ENCODE measurements at regions of chr5 and their contacts with region 1.

Region 1: GRCh38 chr5:98773464-98774191 is at the start of gene RGMB:
- DNase-seq: peak; percentile 98
- H3K4me3 ChIP-seq: peak within 1 kb of the TSS; percentile 71 to 82 (median 80)
- H3K27ac ChIP-seq: peak within 1 kb of the TSS; percentile 76
- H3K4me1 ChIP-seq: peaks cover 42% of the 10 kb centered on the region
- H3K27me3 ChIP-seq: no peaks in the 10 kb centered on the region
- CTCF ChIP-seq: peak in 1 of 2 donors; percentile 17
- total RNA-seq, gene RGMB: 22.3 to 24.8 TPM

Region 2: DNA sequence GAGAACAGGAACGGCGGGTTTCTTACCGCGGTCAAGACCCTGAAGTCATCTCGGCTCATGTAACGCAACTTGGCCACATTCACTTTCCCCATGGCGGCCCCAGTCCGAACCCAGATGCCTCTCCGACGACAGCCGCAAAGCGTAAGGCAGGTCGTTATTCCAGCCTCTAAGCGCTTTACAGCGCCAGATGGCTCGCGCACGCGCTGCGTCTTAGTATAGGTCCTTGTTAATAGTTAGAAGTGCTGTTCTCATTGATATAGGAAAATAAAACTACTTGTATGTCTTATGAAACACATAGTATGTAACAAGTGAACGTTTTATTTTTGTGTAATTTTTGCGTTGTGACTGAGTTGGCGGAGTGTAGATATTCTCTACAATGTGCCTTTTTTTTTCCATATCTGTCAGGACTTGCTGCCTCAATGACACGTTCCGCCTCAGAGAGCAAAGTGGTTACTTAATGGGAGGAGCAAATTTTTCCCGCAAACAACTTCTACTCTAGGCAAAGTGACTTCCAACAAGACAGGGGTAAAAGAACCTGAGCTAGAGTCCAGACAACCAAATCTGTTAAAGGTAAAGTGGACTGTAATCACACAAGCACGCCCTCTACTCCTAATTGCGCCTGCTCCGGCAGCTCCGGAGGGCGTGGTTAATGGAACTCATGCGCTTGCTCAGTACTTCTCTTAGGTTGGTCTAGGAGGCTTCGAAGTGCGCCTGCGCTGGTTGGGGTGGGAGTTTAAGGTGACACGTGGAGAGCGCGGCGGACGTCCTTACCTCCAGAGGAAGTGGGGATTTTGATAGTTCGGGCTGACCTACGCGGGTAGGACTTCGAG is 1590.3 kb before region 1 on chr5 and contains the start of gene RIOK2:
- CTCF ChIA-PET with region 1: interaction called, 3 read pairs
- dilution Hi-C with region 1: no loop called
- in situ Hi-C with region 1: no loop called
- intact Hi-C with region 1: loop called (anchors 5 kb)
- DNase-seq: peak; percentile 91
- H3K4me3 ChIP-seq: peak within 1 kb of the TSS; percentile 80 to 89 (median 80)
- H3K27ac ChIP-seq: peak within 1 kb of the TSS; percentile 97
- H3K4me1 ChIP-seq: peaks cover 10% of the 10 kb centered on the region
- H3K27me3 ChIP-seq: no peaks in the 10 kb centered on the region
- CTCF ChIP-seq: no peak
- total RNA-seq, gene RIOK2: 18.5 to 38.3 TPM

Region 3: GRCh38 chr5:97425511-97425910 is 1348.1 kb before region 1 on chr5:
- CTCF ChIA-PET with region 1: no interaction called
- dilution Hi-C with region 1: no loop called
- in situ Hi-C with region 1: no loop called
- intact Hi-C with region 1: loop called (anchors 1 kb)
- DNase-seq: peak; percentile 2
- H3K4me3 ChIP-seq: no peak overlapping the region
- H3K27ac ChIP-seq: no peak overlapping the region
- H3K4me1 ChIP-seq: no peaks in the 10 kb centered on the region
- H3K27me3 ChIP-seq: no peaks in the 10 kb centered on the region
- CTCF ChIP-seq: peak; percentile 27 to 59

Region 4: GRCh38 chr5:97877588-97877987 is 896.0 kb before region 1 on chr5:
- CTCF ChIA-PET with region 1: interaction called, 4 read pairs
- dilution Hi-C with region 1: no loop called
- in situ Hi-C with region 1: no loop called
- intact Hi-C with region 1: loop called (anchors 5 kb)
- DNase-seq: no peak
- H3K4me3 ChIP-seq: no peak overlapping the region
- H3K27ac ChIP-seq: no peak overlapping the region
- H3K4me1 ChIP-seq: no peaks in the 10 kb centered on the region
- H3K27me3 ChIP-seq: no peaks in the 10 kb centered on the region
- CTCF ChIP-seq: peak in 1 of 2 donors; percentile 24

Region 5: DNA sequence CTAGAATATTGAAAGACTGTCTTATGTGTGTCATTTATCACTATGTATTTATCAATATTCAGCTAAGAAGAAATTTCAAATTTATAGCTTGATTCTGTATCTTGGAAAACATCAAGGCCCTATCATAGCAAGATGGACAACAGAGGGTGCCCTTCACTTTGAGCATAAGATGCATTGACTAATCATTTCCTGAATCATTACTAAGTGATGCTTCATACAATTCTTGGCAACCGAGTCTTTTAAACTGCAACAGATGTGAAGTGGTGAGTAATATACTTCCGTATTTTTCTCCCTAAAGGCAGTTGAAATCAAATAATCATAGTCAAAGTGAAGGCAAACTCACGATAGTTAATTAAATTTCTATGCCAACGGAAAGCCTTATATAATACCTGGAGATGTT is 318.7 kb before region 1 on chr5:
- CTCF ChIA-PET with region 1: interaction called, 10 read pairs
- dilution Hi-C with region 1: no loop called
- in situ Hi-C with region 1: loop called in 1 of 2 experiments (anchors 25 kb)
- intact Hi-C with region 1: loop called (anchors 1 kb)
- DNase-seq: peak; percentile 88
- H3K4me3 ChIP-seq: no peak overlapping the region
- H3K27ac ChIP-seq: peak overlapping the region; percentile 52
- H3K4me1 ChIP-seq: peaks cover 11% of the 10 kb centered on the region
- H3K27me3 ChIP-seq: no peaks in the 10 kb centered on the region
- CTCF ChIP-seq: peak; percentile 24 to 56

Region 6: GRCh38 chr5:98928873-98929696 is 155.5 kb after region 1 on chr5 and contains the start of gene CHD1:
- CTCF ChIA-PET with region 1: no interaction called
- dilution Hi-C with region 1: no loop called
- in situ Hi-C with region 1: no loop called
- intact Hi-C with region 1: loop called (anchors 5 kb)
- DNase-seq: peak; percentile 97
- H3K4me3 ChIP-seq: peak within 1 kb of the TSS; percentile 63 to 93 (median 80)
- H3K27ac ChIP-seq: peak within 1 kb of the TSS; percentile 93
- H3K4me1 ChIP-seq: peaks cover 13% of the 10 kb centered on the region
- H3K27me3 ChIP-seq: no peaks in the 10 kb centered on the region
- CTCF ChIP-seq: no peak
- total RNA-seq, gene CHD1: 34.9 to 39.8 TPM